ENCODE measurements at regions of chr21 and their contacts with region 1.

Region 1: DNA sequence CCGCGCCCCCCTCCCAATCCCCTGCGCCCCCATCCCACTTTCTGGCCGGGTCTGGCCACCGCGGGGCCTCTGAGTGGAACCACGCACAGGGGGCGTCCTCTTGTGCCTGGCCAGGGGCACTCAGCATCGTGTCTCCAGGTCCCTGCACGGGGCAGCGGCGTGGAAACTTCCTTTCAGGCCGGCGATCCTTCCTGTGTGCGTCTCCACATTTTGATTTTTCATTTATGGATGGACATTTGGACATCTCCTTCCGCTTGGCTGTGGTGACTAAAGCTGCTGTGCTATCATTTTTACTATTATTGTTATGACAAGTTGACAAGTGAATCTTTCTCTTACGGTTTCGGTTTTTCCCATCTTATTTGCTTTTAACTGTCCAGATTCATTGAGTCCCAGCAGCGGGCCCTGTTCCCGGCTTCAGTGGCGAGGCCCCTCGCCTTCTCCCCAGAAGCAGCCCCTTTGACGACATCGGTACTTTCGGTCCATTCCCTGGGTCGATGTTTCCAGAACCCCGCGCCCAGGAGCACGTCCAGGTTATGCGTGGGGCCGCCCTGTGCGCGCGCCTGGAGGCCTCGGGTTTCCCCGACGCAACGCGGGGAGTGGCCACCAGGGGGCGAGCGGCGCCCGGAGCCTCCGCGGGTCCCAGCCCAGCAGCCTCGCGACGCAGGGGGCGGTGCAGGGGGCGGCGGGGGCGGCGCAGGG is 12.4 kb upstream of the SLC19A1 start:
- DNase-seq: peak; percentile 66 to 89 (median 82)
- H3K4me3 ChIP-seq: peak overlapping the region; percentile 85 to 87
- H3K4me3 Mint-ChIP-seq: peak overlapping the region; percentile 81 to 94 (median 90)
- H3K27ac ChIP-seq: peak overlapping the region; percentile 63
- H3K27ac Mint-ChIP-seq: peak overlapping the region; percentile 57 to 96 (median 91)
- H3K4me1 ChIP-seq: peaks cover 34% of the 10 kb centered on the region
- H3K4me1 Mint-ChIP-seq: peaks cover 20 to 36% (median 24%) of the 10 kb centered on the region in 4 donors
- H3K27me3 ChIP-seq: no peaks in the 10 kb centered on the region
- H3K27me3 Mint-ChIP-seq: no peaks in the 10 kb centered on the region

Region 2: DNA sequence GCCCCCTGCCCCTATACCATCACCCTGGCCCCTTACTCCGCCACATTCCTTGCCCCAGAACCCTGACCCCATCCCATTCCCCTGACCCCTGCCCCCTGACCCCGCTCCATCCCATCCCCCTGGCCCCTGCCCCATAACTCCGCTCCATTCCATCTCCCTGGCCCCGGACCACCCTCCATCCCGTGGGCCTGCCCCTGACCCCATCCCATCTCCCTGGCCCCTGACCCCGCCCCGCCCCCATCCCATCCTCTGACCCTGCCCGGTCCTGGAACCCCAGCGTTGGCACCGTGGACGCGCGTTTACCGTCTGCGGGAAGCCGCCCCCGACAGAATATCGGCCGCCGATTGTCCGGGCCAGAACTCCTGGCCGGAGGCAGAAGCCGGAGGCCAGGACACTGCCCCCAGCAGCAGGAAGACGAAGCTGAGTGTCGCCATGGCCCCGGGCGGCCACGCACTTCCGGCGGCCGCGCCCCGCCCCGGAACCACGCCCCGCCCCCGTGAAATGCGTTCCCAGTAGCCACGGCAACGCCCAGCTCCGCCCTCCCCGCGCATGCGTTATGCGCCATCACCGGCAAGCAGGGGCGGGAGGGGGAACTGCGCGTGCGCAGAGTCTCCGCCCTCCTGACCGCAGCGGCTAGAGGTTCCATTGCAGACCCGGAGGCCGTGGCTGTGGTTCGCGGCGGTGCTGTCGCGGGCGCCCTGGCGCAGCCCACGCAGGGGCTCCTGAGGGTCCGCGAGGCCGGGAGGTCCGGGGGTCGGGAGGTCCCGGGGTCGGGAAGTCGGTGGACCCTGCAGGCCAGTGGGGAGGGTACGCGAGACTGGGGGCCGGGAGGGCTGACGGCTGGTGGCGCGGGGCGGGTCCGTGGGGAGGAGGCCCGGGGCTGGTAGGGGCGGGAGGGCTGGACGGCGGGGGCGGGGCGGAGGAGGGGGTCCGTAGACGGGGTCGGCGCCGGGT is 266.9 kb before region 1 on chr21 and contains the start of gene POFUT2:
- CTCF ChIA-PET with region 1: no interaction called
- POLR2A ChIA-PET with region 1: no interaction called
- intact Hi-C with region 1: loop called (anchors 5 kb)
- DNase-seq: peak; percentile 95 to 100 (median 98)
- H3K4me3 ChIP-seq: peak within 1 kb of the TSS in 1 of 2 donors; percentile 63
- H3K4me3 Mint-ChIP-seq: peak within 1 kb of the TSS; percentile 78 to 96 (median 84)
- H3K27ac ChIP-seq: peak within 1 kb of the TSS; percentile 78
- H3K27ac Mint-ChIP-seq: peak within 1 kb of the TSS; percentile 87 to 97 (median 93)
- H3K4me1 ChIP-seq: peaks cover 14% of the 10 kb centered on the region
- H3K4me1 Mint-ChIP-seq: peaks cover 12 to 46% (median 24%) of the 10 kb centered on the region in 4 donors
- H3K27me3 ChIP-seq: no peaks in the 10 kb centered on the region
- H3K27me3 Mint-ChIP-seq: no peaks in the 10 kb centered on the region
- total RNA-seq, gene POFUT2: 40.1 to 40.8 TPM

Region 3: DNA sequence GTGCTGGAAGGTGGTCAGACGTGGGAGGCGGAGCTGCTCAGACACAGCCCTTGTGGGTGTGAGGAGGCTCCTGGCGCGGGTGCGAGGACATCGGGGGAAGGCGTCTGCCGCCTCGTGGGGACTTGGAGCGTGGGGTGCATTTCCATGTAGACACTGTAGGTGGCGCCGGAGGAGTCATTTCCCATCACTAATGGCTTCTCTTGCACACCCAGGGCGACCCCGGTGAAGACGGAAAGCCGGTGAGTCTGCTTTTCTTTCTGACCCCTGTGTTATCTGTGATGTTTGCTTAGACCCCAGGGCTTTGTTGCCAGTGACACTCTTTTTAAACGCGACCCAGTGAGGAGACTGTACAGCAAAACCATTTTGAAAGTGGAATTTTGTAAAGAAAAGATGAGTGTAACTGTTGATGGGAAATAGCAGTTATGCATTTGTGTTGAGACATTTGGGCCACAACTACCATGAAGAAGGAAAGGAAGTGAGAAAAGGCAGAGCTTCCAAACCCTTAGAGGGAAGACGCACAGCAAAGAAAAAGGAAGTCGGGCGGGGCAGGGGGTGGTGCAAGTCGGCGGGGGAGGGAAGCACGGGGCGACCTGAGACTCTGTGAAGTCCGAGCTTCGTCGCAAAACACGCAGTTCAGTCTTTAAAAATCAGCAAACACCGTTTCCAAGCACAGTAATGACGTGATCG is 76.4 kb before region 1 on chr21:
- CTCF ChIA-PET with region 1: no interaction called
- POLR2A ChIA-PET with region 1: interaction called, 6 read pairs
- intact Hi-C with region 1: loop called (anchors 1 kb)
- DNase-seq: peak; percentile 80 to 83 (median 81)
- H3K4me3 ChIP-seq: peak overlapping the region; percentile 57 to 66
- H3K4me3 Mint-ChIP-seq: peak overlapping the region; percentile 85 to 94 (median 90)
- H3K27ac ChIP-seq: peak overlapping the region; percentile 41
- H3K27ac Mint-ChIP-seq: peak overlapping the region; percentile 88 to 99 (median 97)
- H3K4me1 ChIP-seq: peaks cover 34% of the 10 kb centered on the region
- H3K4me1 Mint-ChIP-seq: peaks cover 23 to 37% (median 32%) of the 10 kb centered on the region in 4 donors
- H3K27me3 ChIP-seq: no peaks in the 10 kb centered on the region
- H3K27me3 Mint-ChIP-seq: no peaks in the 10 kb centered on the region

Region 4: DNA sequence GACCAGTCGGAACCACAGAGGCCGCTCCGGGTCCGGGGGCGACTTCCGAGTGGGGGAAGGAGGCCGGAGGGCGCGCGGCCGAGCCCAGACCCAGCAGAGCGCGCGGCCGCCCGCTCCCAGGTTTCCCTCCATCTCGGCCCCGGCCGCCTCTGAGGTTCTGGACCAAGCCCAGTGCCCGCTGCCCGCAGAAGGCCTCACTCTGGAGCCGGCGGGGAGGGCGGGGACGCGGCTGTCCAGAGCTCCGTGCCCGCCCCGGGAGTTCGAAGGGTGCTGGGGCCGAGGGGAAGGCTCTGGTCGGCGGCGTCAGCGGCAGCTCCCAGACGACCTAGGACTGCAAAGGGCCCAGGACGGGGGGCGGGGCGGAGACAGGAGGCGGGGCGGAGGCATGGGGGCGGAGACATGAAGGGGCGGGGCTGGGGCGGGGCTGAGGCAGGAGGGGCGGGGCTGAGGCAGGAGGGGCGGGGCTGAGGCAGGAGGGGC is 35.7 kb after region 1 on chr21:
- CTCF ChIA-PET with region 1: interaction called, 19 read pairs
- POLR2A ChIA-PET with region 1: interaction called, 6 read pairs
- intact Hi-C with region 1: loop called (anchors 2 kb)
- DNase-seq: peak in 4 of 5 donors; percentile 70 to 76 (median 70)
- H3K4me3 ChIP-seq: peak overlapping the region in 1 of 2 donors; percentile 42
- H3K4me3 Mint-ChIP-seq: peak overlapping the region in 7 of 8 donors; percentile 23 to 76 (median 49)
- H3K27ac ChIP-seq: peak overlapping the region; percentile 23
- H3K27ac Mint-ChIP-seq: no peak overlapping the region
- H3K4me1 ChIP-seq: peaks cover 29% of the 10 kb centered on the region
- H3K4me1 Mint-ChIP-seq: peaks cover 9 to 15% (median 11%) of the 10 kb centered on the region in 4 donors
- H3K27me3 ChIP-seq: no peaks in the 10 kb centered on the region
- H3K27me3 Mint-ChIP-seq: peaks cover 2 to 8% of the 10 kb centered on the region in 2 donors

Region 5: DNA sequence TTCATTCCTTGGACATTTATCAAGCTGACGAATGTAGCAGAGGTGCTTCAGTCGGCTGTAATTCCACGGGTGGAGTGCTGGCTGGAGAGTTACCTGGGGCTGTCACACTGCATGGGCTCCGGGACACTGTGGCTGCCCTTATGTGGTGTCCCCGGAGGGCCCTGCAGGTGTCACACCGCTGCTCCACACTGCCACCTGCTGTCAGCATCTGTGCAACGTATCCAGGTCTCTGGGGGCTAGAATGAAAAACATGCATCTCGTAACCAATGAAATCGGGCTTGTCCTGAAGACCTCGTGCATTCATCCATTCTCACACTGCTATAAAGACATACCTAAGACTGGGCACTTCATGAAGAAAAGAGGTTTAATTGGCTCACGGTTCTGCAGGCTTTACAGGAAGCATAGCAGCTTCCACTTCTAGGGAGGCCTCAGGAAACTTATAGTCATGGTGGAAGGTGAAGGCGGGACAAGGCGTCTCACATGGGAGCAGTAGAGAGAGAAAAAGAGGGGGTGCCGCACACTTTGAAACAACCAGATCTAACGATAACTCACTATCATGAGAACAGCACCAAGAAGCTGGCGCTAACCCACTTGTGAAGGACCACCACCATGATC is 42.2 kb after region 1 on chr21:
- CTCF ChIA-PET with region 1: interaction called, 19 read pairs
- POLR2A ChIA-PET with region 1: interaction called, 6 read pairs
- intact Hi-C with region 1: loop called (anchors 1 kb)
- DNase-seq: peak; percentile 75 to 79 (median 77)
- H3K4me3 ChIP-seq: no peak overlapping the region
- H3K4me3 Mint-ChIP-seq: no peak overlapping the region
- H3K27ac ChIP-seq: no peak overlapping the region
- H3K27ac Mint-ChIP-seq: peak overlapping the region in 6 of 7 donors; percentile 14 to 90 (median 83)
- H3K4me1 ChIP-seq: peaks cover 22% of the 10 kb centered on the region
- H3K4me1 Mint-ChIP-seq: peaks cover 16 to 21% (median 18%) of the 10 kb centered on the region in 4 donors
- H3K27me3 ChIP-seq: no peaks in the 10 kb centered on the region
- H3K27me3 Mint-ChIP-seq: peaks cover 0 to 3% of the 10 kb centered on the region in 2 donors

Region 6: DNA sequence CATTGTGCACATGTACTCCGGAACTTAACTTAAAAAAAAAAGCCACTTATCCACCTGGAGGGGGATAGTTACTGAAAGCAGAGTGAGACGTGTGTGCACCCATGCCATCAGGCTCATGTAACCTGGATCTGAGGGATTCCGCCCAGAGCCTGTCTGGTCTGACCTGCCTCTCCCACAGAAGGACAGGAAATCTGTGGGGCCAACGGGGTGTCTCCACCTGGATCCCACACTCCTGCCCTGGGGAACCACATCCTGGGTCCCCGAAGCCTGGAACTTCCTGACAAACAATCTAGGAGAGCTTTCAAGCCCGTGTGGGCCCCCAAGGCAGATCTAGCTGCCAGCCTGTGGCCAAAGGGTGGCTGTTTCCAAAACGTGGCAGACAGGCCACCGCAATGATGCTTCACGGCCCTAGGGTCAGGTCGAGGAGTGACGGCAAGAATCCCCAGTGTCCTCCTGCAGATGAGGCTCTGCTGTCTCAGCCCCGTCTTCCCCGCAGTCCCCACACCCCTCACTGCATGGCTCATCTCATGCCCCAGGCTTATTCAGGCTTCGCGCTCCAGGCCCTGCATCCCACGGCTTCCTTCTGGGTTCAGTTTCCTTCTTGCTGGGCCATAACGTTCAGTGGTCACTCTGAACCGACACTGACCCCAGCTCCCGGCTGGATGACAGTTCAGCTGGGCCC is 67.9 kb after region 1 on chr21:
- CTCF ChIA-PET with region 1: no interaction called
- POLR2A ChIA-PET with region 1: no interaction called
- intact Hi-C with region 1: no loop called
- DNase-seq: no peak
- H3K4me3 ChIP-seq: no peak overlapping the region
- H3K4me3 Mint-ChIP-seq: no peak overlapping the region
- H3K27ac ChIP-seq: no peak overlapping the region
- H3K27ac Mint-ChIP-seq: no peak overlapping the region
- H3K4me1 ChIP-seq: no peaks in the 10 kb centered on the region
- H3K4me1 Mint-ChIP-seq: peaks cover 0 to 8% (median under 1%) of the 10 kb centered on the region in 4 donors
- H3K27me3 ChIP-seq: no peaks in the 10 kb centered on the region
- H3K27me3 Mint-ChIP-seq: peaks cover 3% of the 10 kb centered on the region in 2 donors

Region 7: DNA sequence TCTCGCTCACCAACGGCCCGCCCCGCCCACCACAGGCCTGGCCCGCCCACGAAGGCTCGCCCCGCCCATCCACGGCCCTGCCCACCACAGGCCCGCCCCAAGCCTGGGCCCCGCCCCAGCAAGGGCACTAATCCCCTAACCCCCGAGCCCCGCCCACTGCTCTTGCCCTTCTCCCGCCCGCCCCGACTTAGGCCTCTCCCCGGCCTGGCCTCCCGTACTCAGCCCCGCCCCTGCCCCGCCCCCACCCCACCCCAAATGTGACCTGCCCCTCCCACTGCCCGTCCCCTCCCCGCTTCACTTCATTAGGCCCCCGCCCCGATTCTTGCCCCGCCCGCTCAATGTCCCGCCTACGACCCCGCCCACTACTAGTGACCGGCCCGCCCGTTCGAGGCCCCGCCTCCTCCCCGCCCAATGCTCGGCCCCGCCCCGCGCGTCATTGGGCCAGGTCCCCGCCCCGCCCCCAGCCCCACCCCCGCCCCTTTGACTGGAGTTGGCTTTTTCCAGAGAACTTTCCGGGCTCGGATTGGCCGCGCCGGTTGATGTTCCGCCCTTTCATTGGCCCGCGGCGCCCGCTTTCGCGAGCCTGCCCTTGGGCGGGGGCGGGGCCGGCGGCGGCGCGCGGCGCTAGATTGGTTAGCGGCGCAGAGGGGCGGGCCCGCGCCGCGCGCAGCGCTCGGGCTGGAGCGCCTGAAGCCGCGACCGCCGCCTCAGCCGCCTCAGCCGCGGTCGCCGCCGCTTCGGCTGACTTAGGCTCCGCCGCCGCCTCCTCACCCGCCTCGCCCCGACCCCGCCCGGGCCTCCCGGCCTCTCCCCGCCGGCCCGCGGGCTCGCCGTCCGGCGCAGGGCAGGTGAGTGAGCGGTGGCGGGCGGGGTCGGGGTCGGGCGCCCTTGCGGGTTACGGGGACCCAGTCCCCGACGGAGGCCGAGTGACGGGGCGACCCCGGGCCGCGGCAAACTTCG is 88.7 kb after region 1 on chr21 and contains the start of gene PCBP3:
- CTCF ChIA-PET with region 1: no interaction called
- POLR2A ChIA-PET with region 1: no interaction called
- intact Hi-C with region 1: loop called (anchors 10 kb)
- DNase-seq: peak; percentile 87 to 96 (median 89)
- H3K4me3 ChIP-seq: no peak within 1 kb of the TSS
- H3K4me3 Mint-ChIP-seq: peak within 1 kb of the TSS; percentile 69 to 83 (median 78)
- H3K27ac ChIP-seq: no peak within 1 kb of the TSS
- H3K27ac Mint-ChIP-seq: peak within 1 kb of the TSS in 5 of 7 donors; percentile 78 to 98 (median 82)
- H3K4me1 ChIP-seq: peaks cover 24% of the 10 kb centered on the region
- H3K4me1 Mint-ChIP-seq: peaks cover 7 to 38% (median 25%) of the 10 kb centered on the region in 4 donors
- H3K27me3 ChIP-seq: peaks cover 11% of the 10 kb centered on the region
- H3K27me3 Mint-ChIP-seq: peaks cover 10 to 20% of the 10 kb centered on the region in 2 donors
- total RNA-seq, gene PCBP3: 0.99 to 1.6 TPM

Measured in CD4-positive, alpha-beta memory T cell (primary cell).